ENCODE measurements at regions of chr4 and their contacts with region 1.

Region 1: GRCh38 chr4:184819786-184820185 is 6.0 kb downstream of the ACSL1 start:
- DNase-seq: no peak
- ATAC-seq: no peak
- H3K4me3 ChIP-seq: no peak overlapping the region
- H3K27ac ChIP-seq: no peak overlapping the region
- H3K4me1 ChIP-seq: peaks cover 26% of the 10 kb centered on the region
- CTCF ChIP-seq: no peak
- EP300 ChIP-seq: no peak
- POLR2A ChIP-seq: no peak
- RAD21 ChIP-seq: no peak

Region 2: GRCh38 chr4:184745831-184746795 is 73.7 kb before region 1 on chr4:
- CTCF ChIA-PET with region 1: interaction called, 10 read pairs
- POLR2A ChIA-PET with region 1: no interaction called
- DNase-seq: peak; percentile 59 to 73
- ATAC-seq: peak; percentile 84 to 86; a peak in 5 of 6 replicates
- H3K4me3 ChIP-seq: no peak overlapping the region
- H3K27ac ChIP-seq: peak overlapping the region in 1 of 2 experiments; percentile 53; a peak in 1 of 6 replicates
- H3K4me1 ChIP-seq: peaks cover 5% of the 10 kb centered on the region; the same call in 2 of the 3 replicates
- CTCF ChIP-seq: peak; percentile 73
- EP300 ChIP-seq: no peak
- POLR2A ChIP-seq: no peak
- RAD21 ChIP-seq: peak; percentile 78 to 83

Region 3: DNA sequence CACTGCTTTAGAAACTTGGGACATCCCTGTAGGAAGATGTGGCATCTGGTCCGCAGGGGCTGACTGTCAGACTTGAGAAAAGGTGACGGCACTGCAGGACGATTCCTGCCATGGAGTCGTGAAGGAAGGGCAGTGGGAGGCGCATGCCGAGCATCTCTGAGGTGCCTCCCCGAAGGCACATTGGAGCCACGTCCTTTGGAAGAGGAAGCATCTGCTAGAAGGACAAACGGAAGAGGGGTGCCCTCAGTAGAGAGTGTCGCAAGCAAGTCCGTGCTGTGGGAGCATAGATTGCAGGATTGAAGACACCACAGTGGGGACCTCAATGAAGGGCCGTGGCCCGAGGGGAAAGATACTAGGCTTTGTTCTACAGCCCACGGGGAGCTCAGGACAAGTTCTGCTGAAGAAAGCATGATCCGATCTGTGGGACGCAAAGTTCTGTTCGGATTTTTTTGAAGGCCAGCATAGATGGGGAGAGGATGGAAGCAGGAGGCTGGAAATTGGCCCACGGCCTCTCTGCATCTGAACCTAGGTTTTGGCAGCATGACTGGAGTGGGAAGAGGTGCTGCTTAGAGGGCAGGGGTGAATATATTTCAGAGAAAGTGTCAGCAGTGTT is 174.3 kb after region 1 on chr4:
- CTCF ChIA-PET with region 1: no interaction called
- POLR2A ChIA-PET with region 1: no interaction called
- DNase-seq: no peak
- ATAC-seq: no peak
- H3K4me3 ChIP-seq: no peak overlapping the region
- H3K27ac ChIP-seq: no peak overlapping the region
- H3K4me1 ChIP-seq: no peaks in the 10 kb centered on the region
- CTCF ChIP-seq: no peak
- EP300 ChIP-seq: no peak
- POLR2A ChIP-seq: no peak
- RAD21 ChIP-seq: no peak

Measured in A549 (cell line).